Activated CD4-positive, alpha-beta T cell treated with anti-CD3 and anti-CD28 coated beads, Interleukin-2, amount 10 ng/mL, durations not matched to agents 24 days and 14 days (primary cell): ENCODE measurements at regions of chr1 and their contacts with region 1.

Region 1: DNA sequence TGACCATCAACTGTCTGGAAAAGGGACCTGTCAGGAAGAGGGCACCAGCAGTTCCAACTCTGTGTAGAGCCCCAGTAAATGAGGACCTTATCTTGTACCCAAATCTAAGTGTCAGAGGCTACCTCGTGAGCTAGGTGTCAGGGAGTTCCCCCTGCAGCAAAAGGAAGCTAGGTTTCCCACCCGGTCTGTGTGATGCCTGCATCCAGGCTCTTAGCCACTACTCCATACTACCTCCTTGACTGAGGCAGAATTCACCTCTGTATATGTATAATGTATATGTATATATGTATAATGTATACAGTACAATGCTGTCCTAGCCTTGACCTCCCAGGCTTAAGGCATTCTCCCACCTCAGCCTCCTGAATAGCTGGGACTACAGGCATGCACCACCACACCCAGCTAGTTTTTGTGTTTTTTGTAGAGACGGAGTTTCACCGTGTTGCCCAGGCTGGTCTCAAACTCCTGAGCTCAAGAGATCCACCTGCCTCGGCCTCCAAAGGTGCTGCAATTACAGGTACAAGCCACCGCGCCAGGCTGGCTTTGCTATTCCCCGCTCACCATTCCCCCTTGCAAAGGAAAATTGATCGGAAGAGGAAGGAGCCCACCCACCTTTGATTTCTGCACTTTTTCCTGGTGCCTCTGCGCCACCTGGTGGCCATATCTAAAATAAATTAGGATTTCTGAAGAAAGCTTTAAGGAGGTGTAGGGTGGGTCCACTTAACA is 15.7 kb upstream of the LUZP1 start:
- DNase-seq: peak; percentile 82
- H3K4me3 Mint-ChIP-seq: peak overlapping the region; percentile 70
- H3K27ac Mint-ChIP-seq: no peak overlapping the region
- H3K4me1 Mint-ChIP-seq: peaks cover 8% of the 10 kb centered on the region
- H3K27me3 Mint-ChIP-seq: peaks cover 7% of the 10 kb centered on the region

Region 2: DNA sequence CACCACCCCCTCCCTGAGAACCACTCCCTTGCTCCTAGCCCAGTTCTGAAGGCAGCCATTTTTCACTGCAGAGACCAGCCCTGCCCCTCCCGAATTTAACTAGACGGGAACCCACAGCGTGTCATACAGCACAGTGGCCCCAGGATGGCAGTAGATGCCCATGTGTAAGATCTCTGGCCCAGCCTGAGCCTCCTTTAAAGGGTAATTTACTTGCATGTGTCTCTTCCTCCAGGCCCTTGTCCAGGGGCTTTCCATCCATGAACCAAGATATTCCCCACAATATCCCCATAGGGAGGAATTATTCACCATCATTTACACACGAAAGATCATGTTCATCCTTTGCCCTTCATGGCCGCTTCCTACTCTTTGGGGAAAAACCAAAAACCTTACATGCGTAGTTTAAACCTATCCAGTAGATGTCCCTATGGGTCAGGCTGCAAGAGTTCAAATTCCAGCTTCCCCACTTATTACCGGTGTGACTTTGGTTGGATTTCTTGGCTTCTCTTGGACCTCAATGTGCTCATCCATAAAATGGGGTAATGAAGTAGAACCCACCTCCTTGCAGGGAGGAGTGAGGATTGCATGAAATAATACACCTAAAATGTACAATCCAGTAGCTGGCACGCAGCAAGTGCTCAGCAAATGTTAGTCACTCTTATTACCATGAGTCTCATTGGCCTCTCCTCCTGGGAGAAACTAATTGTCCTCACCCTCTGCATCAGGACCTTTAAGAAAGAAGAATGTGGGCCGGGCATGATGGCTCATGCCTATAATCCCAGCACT is 207.7 kb before region 1 on chr1:
- intact Hi-C with region 1: loop called (anchors 1 kb)
- DNase-seq: peak; percentile 86
- H3K4me3 Mint-ChIP-seq: no peak overlapping the region
- H3K27ac Mint-ChIP-seq: no peak overlapping the region
- H3K4me1 Mint-ChIP-seq: peaks cover 4% of the 10 kb centered on the region
- H3K27me3 Mint-ChIP-seq: peaks cover 23% of the 10 kb centered on the region

Region 3: GRCh38 chr1:23098463-23099170 is 85.8 kb before region 1 on chr1:
- intact Hi-C with region 1: loop called (anchors 1 kb)
- DNase-seq: peak; percentile 88
- H3K4me3 Mint-ChIP-seq: peak overlapping the region; percentile 26
- H3K27ac Mint-ChIP-seq: no peak overlapping the region
- H3K4me1 Mint-ChIP-seq: peaks cover 41% of the 10 kb centered on the region
- H3K27me3 Mint-ChIP-seq: no peaks in the 10 kb centered on the region

Region 4: DNA sequence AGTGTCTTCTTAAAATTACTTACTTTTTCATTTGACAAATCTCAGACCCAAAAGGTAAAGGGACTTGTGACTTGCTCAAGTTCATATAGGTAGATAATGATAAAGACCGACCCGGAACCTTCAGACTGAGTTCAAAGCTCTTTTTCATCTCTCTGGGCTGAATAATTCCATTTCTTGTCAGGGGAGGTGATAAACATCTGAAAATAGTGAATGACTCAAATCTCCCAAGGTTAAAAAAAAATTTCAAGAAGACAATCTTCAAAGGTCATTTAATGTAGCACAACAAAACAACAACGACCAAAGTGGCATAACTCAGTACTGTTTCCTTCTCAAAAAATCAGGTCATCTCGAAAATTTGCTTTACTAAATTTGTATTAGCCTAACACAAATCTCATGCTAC is 36.3 kb before region 1 on chr1:
- intact Hi-C with region 1: no loop called
- DNase-seq: peak; percentile 62
- H3K4me3 Mint-ChIP-seq: peak overlapping the region; percentile 36
- H3K27ac Mint-ChIP-seq: peak overlapping the region; percentile 45
- H3K4me1 Mint-ChIP-seq: peaks cover 21% of the 10 kb centered on the region
- H3K27me3 Mint-ChIP-seq: no peaks in the 10 kb centered on the region